ENCODE measurements at regions of chr1 and their contacts with region 1.

Region 1: DNA sequence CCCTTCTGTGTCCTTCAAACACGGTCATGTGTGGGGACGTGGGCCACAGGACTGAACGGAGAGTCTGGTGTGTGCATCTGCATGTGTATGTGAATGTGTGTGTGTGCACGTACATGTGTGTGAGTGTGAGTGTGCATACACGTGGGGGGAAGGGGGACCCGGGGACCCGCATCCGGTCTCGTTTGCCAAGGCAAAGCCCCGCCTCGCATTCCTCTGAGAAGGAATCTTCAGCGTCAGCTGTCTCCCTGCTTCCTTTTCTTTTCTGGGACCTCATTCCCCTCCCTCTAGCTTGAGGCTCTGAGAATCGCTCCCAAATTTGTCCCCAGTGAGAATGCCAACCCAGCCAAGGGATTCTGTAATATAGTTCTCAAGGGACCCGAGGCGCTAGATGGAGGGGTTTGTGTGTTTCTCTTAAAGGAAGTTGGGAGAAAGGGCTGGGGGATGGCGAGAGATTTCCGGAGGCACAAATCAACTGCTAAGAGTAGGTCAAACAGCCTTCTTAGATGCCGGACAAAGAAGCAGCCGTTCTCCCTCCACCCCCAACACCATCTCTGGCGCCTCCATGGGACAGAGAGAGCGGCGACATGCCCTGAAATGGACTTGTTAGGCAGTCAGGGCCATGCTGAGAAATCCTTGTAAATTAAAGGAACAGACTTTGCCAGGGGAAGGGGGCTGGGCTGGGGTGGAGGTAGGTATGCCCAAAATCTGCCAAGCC is 6.6 kb downstream of the IFFO2 start:
- DNase-seq: no peak
- ATAC-seq: peak; percentile 42

Region 2: DNA sequence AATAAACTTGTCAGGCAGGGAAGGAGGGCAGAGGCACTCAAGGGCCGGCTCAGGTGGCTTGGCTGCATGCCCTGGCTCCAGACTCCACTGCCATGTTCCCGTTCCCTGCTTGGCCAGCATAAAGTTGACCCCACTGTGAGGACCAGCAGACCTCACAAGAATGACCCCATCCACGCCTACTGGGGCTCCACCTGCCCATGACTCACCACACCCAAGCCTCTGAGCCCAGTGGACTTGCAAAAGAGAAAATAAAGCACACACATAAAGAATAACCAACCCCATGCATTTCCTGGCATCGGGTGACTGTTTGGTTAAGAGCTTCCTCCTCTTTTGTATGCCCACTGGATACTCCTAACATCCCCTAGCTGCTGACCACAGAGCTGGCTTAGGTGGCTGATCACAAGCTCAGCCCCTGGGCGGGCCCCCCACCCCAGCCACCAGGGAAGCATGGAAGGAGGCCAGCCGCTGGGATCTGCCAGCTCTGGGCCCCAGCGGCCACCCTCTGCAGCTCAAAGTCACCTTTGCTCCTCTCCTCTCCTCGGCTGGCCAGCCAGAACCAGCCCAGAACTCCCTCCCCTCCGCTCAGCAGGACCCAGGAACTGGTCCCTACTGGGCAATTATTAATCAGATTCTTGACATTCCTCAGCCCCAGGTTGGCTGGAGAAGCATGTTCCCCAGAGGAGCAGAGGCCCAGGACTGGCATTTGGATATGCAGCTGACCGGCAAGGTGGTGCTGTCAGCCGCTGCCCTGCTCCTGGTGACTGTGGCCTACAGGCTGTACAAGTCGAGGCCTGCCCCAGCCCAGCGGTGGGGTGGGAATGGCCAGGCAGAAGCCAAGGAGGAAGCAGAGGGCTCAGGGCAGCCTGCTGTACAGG is 469.3 kb before region 1 on chr1 and contains the start of gene KLHDC7A:
- intact Hi-C with region 1: no loop called
- DNase-seq: no peak
- ATAC-seq: no peak
- total RNA-seq, gene KLHDC7A: not detected

Region 3: DNA sequence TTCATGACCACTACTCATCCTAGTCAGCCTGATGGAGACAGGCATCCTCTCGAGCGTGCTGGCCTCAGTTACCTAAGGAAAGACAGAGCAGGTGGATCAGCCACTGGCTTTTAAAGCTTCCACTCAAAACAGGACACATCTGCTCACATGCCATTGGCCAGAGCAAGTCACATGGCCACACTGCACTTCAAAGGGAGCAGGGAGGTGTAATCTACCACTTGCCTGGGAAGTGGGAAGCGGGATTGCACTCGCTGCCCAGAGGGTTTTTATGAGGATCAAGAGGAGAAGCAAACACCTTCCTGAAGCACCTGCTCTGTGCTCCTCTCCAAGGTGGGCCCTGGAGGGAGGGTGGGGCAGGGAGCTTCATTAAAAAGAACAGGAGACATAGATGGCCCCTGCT is 198.4 kb before region 1 on chr1:
- intact Hi-C with region 1: no loop called
- DNase-seq: no peak
- ATAC-seq: no peak

Region 4: DNA sequence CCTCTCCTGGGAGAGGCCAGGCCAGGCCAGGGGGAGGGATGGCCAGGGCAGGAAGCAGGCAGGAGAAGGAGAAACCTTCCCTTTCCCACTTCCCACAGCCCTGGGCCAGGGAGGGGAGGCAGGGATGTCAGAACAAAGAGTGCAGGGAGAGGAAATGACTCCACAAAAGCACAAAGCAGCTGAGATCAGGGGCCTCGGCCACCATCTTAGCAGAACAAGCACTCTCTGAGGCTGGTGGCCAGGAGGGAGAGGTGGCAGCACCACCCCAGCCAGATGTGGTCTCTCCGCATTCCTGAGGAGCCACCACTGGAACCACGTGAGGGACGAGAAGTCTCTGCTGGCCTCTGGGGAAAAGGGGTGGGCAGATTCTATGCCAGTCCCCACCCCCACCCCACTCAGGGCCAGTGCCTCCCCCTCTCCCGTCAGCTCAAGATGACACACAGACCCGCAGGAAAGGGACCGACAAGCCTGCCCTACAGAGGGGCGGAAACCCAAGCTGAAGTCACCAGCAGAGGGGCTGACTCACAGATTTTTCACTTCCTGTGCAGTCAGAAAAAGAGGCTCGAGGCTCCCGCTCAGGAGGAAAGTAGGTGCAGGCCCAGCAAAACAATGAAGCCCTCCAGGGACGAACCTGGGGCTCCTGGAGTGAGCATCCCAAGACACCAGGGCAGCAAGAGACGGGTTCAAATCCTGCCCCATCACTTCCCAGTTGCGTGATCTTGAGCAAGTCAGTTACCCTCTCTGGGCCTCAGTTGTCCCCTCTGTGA is 23.3 kb before region 1 on chr1:
- intact Hi-C with region 1: loop called (anchors 2 kb)
- DNase-seq: peak; percentile 76
- ATAC-seq: peak; percentile 32

Region 5: DNA sequence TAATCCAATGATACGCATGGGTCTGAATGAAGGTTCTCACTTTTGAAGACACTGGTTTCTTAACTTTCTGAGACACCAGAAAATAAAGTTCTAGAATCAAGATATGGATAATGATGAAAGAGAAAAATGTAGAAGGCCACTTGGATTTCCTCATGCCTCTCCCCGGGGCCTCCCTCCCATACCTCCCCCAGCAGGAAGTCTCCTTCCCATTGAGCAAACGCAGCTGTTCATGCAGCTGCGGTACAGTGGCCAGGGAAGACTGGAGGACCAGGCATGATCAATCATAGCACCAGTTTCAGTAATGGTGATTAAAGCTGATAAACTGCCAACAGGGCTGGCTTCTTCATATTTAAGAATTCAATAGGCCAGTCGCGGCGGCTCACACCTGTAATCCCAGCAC is 271.1 kb after region 1 on chr1:
- intact Hi-C with region 1: no loop called
- DNase-seq: no peak
- ATAC-seq: peak; percentile 76

Measured in Right ventricle myocardium inferior (tissue), 1 donor.